CD4-positive, alpha-beta T cell (primary cell): ENCODE measurements at regions of chr6 and their contacts with region 1.

Region 1: DNA sequence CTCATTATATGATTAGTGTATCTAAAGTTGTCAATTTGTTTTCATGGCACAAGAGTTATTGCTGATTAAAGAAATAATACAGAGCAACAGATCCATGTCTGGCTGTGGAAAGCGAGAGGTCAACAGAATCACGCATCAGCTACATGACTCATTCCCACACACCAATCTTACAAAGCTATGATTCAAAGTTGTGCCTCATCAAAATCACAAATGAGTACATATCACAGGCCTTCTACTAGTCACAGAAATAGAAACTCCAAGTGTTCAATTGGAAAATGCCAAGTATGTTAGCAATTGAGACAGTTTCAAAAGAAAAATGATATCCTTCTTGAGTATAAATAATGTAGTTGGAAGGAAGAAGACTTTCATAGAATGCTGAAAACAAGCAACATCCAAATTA is 57.8 kb upstream of the NKAIN2 start:
- DNase-seq: no peak
- ATAC-seq: no peak
- H3K4me3 ChIP-seq: no peak overlapping the region
- H3K4me3 Mint-ChIP-seq: no peak overlapping the region
- H3K27ac ChIP-seq: no peak overlapping the region
- H3K27ac Mint-ChIP-seq: no peak overlapping the region
- H3K4me1 ChIP-seq: no peaks in the 10 kb centered on the region
- H3K4me1 Mint-ChIP-seq: no peaks in the 10 kb centered on the region
- H3K27me3 ChIP-seq: no peaks in the 10 kb centered on the region
- H3K27me3 Mint-ChIP-seq: no peaks in the 10 kb centered on the region
- CTCF ChIP-seq: no peak

Region 2: GRCh38 chr6:123777563-123777962 is 31.7 kb after region 1 on chr6:
- CTCF ChIA-PET with region 1: no interaction called
- POLR2A ChIA-PET with region 1: no interaction called
- intact Hi-C with region 1: no loop called
- DNase-seq: no peak
- ATAC-seq: no peak
- H3K4me3 ChIP-seq: no peak overlapping the region
- H3K4me3 Mint-ChIP-seq: no peak overlapping the region
- H3K27ac ChIP-seq: no peak overlapping the region
- H3K27ac Mint-ChIP-seq: no peak overlapping the region
- H3K4me1 ChIP-seq: no peaks in the 10 kb centered on the region
- H3K4me1 Mint-ChIP-seq: no peaks in the 10 kb centered on the region
- H3K27me3 ChIP-seq: no peaks in the 10 kb centered on the region
- H3K27me3 Mint-ChIP-seq: no peaks in the 10 kb centered on the region
- CTCF ChIP-seq: no peak

Region 3: DNA sequence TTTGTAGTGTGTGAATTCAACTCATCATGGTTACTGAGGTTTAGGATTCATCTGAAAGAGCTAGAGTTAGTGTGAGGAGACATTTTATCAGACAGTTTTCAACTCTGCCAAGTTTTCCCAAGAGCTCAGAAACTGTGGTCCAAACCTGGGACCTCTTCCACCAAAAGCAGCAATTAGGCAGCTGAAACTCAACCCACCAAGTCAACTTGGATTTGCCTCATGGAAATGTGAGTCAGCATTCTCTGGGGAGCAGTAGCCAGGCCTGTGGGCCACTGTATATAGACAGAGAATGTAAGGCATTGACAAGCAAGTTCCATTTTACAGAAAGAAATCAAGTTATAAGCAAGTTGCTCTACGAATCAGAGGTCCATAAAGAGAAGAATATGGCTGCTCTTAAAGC is 1734.7 kb after region 1 on chr6:
- CTCF ChIA-PET with region 1: no interaction called
- POLR2A ChIA-PET with region 1: no interaction called
- intact Hi-C with region 1: loop called in 1 of 2 experiments (anchors 10 kb)
- DNase-seq: no peak
- ATAC-seq: no peak
- H3K4me3 ChIP-seq: no peak overlapping the region
- H3K4me3 Mint-ChIP-seq: no peak overlapping the region
- H3K27ac ChIP-seq: no peak overlapping the region
- H3K27ac Mint-ChIP-seq: no peak overlapping the region
- H3K4me1 ChIP-seq: no peaks in the 10 kb centered on the region
- H3K4me1 Mint-ChIP-seq: no peaks in the 10 kb centered on the region
- H3K27me3 ChIP-seq: no peaks in the 10 kb centered on the region
- H3K27me3 Mint-ChIP-seq: no peaks in the 10 kb centered on the region
- CTCF ChIP-seq: no peak